ENCODE measurements at regions of chr5 and their contacts with region 1.

Region 1: GRCh38 chr5:154405078-154405792 is 40.6 kb upstream of the SAP30L start:
- ATAC-seq: peak; percentile 90 to 99 (median 98)
- H3K4me3 ChIP-seq: peak overlapping the region; percentile 10 to 34 (median 21)
- H3K27ac ChIP-seq: no peak overlapping the region
- H3K4me1 ChIP-seq: peaks cover 10 to 14% of the 10 kb centered on the region in 2 donors

Region 2: GRCh38 chr5:154060606-154061005 is 344.6 kb before region 1 on chr5:
- in situ Hi-C with region 1: loop called in 6 of 9 experiments (anchors 10 to 25 kb)
- ATAC-seq: no peak
- H3K4me3 ChIP-seq: no peak overlapping the region
- H3K27ac ChIP-seq: no peak overlapping the region
- H3K4me1 ChIP-seq: no peaks in the 10 kb centered on the region

Region 3: DNA sequence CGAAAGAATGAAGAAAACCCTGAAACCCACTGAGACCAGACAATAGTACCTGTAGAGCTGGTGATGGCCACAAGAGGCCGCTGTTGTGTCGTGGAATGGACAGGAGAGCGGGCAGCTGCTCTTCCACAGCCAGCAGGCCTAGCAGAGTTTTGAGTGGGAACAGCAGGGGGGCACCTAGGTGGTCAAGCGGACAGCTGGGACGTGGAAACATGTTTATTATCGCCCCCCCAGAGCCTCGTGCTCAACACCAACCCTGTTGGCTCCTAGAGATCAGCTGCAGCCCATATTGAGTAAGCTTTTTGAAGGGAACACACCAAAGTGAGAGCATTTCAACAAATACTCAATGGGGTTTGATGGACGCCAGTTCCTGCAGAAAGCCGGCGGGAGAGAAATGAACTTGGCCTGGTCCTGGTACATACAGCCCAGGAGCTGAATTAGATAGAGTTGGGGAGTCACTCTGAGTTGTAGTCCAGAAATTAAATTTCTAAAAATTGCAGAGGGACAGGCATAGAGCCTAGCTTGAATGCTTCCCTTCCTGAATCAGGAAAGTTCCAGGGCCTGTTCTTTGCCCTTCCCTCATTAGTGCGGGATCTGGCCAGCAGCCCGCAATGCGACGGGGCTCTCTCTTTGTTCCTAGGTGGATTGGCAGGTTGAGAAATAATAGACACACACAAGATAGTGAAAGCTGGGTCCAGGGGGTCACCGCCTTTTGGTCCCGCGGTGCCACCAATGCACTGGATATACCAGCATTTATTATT is 332.6 kb before region 1 on chr5:
- in situ Hi-C with region 1: loop called in 8 of 9 experiments (anchors 10 to 25 kb)
- ATAC-seq: peak; percentile 97 to 99 (median 99)
- H3K4me3 ChIP-seq: no peak overlapping the region
- H3K27ac ChIP-seq: no peak overlapping the region
- H3K4me1 ChIP-seq: peaks cover 9% of the 10 kb centered on the region in 2 donors

Region 4: DNA sequence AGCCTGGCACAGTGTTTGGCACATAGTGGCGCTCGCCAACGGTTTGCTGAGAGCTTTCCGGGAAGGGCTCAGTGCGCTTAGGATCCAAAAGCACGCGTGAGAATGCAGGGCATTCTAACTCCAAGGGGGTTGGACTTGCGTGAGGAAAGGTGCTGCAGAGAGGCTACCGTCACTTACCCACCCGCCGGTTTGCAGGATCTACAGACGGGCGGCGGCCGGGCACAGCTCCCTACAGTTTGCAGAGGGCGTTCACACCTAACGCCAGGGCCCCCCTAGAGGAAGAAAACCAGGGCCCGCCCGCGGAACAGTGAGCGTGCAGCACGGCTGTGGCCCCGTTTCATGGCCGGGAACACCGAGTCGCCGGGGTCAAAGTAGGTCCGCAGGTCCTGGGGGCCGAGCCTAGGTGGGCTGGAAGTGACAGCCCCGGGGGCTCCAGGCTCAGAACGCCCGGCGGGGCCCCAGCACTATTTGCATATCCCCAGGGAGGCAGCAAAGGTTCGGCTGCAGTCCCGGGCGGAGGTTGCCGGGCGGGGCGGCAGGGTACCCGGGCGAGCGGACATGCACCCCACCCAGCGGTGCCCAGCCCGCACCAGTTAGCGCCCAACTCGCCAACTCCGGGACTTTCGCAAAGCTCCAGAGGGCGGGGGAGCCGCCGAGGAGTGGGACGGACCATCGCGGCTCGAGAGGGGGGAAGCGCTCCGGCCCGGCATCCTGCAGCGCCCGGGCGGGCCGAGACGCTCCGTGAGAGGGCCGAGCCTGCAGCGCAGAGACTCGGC is 215.2 kb before region 1 on chr5:
- in situ Hi-C with region 1: loop called in 3 of 9 experiments (anchors 10 to 25 kb)
- ATAC-seq: peak; percentile 78 to 90 (median 87)
- H3K4me3 ChIP-seq: peak overlapping the region; percentile 84 to 98 (median 92)
- H3K27ac ChIP-seq: peak overlapping the region; percentile 86 to 90
- H3K4me1 ChIP-seq: peaks cover 19 to 24% of the 10 kb centered on the region in 2 donors

Region 5: DNA sequence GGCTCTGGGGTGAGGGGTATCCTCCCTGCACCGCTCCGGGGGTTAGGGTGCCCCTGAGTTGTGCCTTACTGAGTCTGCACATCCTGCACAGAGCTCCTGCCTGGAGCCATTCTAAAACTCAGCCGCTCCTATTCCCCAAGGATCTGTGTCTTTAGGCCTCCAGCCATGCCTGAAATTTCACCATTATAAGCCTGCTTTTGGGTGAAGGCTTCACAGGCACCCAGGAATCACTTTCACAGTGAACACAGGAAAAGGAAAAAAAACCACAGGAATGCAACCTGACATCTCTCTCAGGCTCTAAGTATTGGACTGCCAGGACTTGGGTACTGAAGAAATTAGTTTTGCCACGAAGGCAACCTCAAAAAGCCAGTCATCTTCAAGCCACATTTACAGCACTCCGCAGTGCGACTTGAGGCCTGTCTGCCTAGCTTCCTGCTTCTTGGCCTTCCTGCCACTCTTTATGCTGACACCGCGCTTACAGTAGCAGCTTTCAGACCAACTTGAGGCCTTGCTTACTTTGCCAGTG is 183.8 kb before region 1 on chr5:
- in situ Hi-C with region 1: loop called in 1 of 9 experiments (anchors 25 kb)
- ATAC-seq: peak in 1 of 8 experiments; percentile 54
- H3K4me3 ChIP-seq: no peak overlapping the region
- H3K27ac ChIP-seq: no peak overlapping the region
- H3K4me1 ChIP-seq: peaks cover 19 to 22% of the 10 kb centered on the region in 2 donors

Region 6: DNA sequence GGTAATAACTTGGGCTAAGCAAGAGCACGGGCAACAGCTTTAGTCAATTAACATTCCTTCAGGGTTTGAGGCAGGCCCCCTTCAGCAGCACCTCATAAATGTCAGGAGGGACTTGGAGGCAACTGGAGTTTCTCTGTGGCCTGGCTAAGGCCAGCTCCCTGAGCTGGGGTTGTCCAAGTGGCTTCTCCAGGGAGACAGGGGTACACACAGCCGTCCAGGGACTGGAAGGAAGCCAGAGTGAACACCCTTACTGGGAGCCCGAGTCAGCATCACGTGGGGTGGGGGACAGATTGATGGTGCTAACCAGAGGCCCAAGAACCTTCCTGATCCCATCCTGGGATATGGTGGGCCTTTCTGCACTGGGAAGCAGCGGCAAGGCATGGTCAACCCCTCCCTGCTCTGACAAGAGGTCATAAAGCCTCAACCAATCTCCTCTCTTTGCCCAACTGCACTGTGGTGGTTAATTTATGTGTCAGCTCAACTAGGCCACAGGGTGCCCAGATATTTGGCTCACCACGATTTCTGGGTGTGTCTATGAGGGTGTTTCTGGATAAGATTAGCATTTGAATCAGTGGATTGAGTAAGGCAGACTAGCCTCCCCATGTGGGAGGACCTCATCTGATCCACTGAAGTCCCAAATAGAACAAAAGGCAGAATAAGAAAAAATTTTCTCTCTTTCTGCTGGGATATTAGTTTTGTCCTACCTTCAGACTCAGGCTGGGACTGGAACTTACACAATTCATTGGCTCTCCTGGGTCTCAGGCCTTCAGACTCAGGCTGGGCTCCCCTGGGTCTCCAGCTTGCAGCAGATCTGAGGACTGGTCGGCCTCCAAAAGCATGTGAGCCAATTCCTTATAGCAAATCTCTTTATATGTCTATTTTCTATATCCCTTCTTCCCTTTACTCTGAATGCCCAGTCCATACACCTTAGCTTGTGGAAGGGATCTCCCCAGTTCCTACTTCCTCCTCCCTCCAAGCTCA is 222.8 kb after region 1 on chr5:
- in situ Hi-C with region 1: no loop called
- ATAC-seq: peak in 3 of 8 experiments; percentile 68 to 93 (median 86)
- H3K4me3 ChIP-seq: no peak overlapping the region
- H3K27ac ChIP-seq: no peak overlapping the region
- H3K4me1 ChIP-seq: no peaks in the 10 kb centered on the region

Region 7: GRCh38 chr5:154857530-154858296 is 452.5 kb after region 1 on chr5:
- in situ Hi-C with region 1: no loop called
- ATAC-seq: peak; percentile 72 to 85 (median 82)
- H3K4me3 ChIP-seq: peak overlapping the region; percentile 63 to 94 (median 85)
- H3K27ac ChIP-seq: peak overlapping the region; percentile 96 to 98
- H3K4me1 ChIP-seq: peaks cover 8 to 15% of the 10 kb centered on the region in 2 donors

Measured in motor neuron (in vitro differentiated cells).